B cell (primary cell): ENCODE measurements at regions of chrX and their contacts with region 1.

Region 1: DNA sequence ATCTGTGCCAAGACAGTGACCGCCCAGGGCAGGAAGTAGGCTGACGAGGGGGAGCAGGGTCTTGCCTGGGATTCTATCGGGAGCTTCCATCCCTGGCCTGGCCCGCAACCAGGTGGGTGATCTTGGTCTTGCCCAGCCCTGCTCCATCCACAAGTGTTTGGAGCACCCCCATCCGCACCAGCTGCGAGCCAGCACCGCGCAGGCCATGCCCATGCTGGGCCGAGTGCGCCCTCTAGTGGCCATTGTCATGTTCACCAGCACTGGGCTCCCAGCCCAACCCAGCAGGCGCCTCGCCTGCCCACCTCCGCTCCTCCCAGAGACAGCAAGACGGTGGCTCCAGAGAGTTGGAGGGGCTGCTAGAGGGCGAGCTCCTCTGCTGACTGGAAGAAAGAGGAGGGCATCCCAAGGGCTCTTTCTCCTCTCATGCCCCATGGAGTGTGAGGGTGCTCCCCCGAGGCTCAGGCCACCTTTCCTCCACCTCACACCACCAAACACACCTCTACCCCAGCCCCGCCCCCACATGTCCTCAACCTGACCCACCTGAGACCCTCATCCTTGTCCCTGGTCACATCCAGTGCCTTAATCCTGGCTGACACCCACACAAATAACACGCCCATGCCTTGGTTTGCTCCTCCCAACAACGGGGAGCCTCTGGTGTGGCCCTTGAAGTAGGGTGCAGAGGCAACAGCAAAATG is 9.8 kb upstream of the ATP2B3 start:
- DNase-seq: peak; percentile 81
- ATAC-seq: peak; percentile 98
- H3K4me3 ChIP-seq: no peak overlapping the region
- H3K4me3 Mint-ChIP-seq: no peak overlapping the region
- H3K27ac ChIP-seq: no peak overlapping the region
- H3K27ac Mint-ChIP-seq: no peak overlapping the region
- H3K4me1 ChIP-seq: peaks cover 0 to 7% of the 10 kb centered on the region in 2 donors
- H3K4me1 Mint-ChIP-seq: peaks cover 2% of the 10 kb centered on the region
- H3K27me3 ChIP-seq: no peaks in the 10 kb centered on the region
- H3K27me3 Mint-ChIP-seq: no peaks in the 10 kb centered on the region
- CTCF ChIP-seq: peak; percentile 70

Region 2: DNA sequence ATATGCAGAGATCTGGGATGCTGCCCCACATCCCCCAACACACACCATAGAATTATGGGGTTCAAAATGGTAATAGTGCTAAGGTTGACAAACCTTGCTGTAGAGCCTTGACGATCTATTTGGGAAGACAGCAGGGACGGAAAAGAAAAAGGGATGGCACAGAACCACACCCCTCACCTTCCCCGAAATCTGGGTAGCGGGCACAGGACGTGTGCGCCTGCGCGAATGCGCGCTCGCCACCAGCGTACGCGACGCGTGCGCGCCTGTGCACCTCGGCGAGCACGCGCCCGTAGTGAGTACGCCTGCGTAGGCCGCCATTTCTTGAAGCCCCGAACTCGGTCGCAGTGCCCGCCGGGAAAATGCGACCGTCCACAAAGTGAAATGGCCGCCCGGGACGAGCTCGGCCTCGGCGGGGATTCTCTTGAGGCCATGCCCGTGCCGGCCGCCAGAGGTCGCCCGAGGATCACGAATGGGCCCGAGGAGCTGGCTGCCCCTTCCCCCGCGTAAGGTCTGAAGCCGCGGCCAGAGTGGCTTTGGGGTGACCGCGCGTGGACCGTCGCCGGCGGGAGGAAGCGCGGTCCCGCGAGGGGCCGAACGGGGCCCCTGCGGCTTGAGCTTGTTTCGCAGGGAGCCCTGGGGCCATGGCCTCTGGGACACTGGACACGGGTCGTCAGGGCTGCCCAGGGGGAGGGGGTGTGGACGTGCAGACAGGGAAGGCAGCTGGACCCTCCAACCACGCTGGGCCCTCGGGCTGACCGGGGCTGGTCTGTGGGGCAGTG is 566.1 kb before region 1 on chrX:
- CTCF ChIA-PET with region 1: interaction called, 11 read pairs
- POLR2A ChIA-PET with region 1: no interaction called
- intact Hi-C with region 1: no loop called
- DNase-seq: peak; percentile 93
- ATAC-seq: peak; percentile 93
- H3K4me3 ChIP-seq: peak overlapping the region; percentile 36 to 70 (median 53)
- H3K4me3 Mint-ChIP-seq: peak overlapping the region; percentile 91
- H3K27ac ChIP-seq: peak overlapping the region; percentile 67 to 76
- H3K27ac Mint-ChIP-seq: peak overlapping the region; percentile 91
- H3K4me1 ChIP-seq: peaks cover 5 to 12% of the 10 kb centered on the region in 2 donors
- H3K4me1 Mint-ChIP-seq: peaks cover 9% of the 10 kb centered on the region
- H3K27me3 ChIP-seq: no peaks in the 10 kb centered on the region
- H3K27me3 Mint-ChIP-seq: no peaks in the 10 kb centered on the region
- CTCF ChIP-seq: peak; percentile 81

Region 3: GRCh38 chrX:152958524-152959465 is 548.8 kb before region 1 on chrX:
- CTCF ChIA-PET with region 1: interaction called, 14 read pairs
- POLR2A ChIA-PET with region 1: no interaction called
- intact Hi-C with region 1: no loop called
- DNase-seq: peak; percentile 93
- ATAC-seq: peak; percentile 97
- H3K4me3 ChIP-seq: peak overlapping the region in 4 of 5 experiments; percentile 31 to 46 (median 36)
- H3K4me3 Mint-ChIP-seq: peak overlapping the region; percentile 87
- H3K27ac ChIP-seq: peak overlapping the region; percentile 70 to 75
- H3K27ac Mint-ChIP-seq: peak overlapping the region; percentile 96
- H3K4me1 ChIP-seq: peaks cover 5 to 15% of the 10 kb centered on the region in 2 donors
- H3K4me1 Mint-ChIP-seq: peaks cover 8% of the 10 kb centered on the region
- H3K27me3 ChIP-seq: no peaks in the 10 kb centered on the region
- H3K27me3 Mint-ChIP-seq: no peaks in the 10 kb centered on the region
- CTCF ChIP-seq: peak; percentile 77

Region 4: GRCh38 chrX:153032397-153033118 is 475.1 kb before region 1 on chrX:
- CTCF ChIA-PET with region 1: interaction called, 19 read pairs
- POLR2A ChIA-PET with region 1: no interaction called
- intact Hi-C with region 1: no loop called
- DNase-seq: peak; percentile 72
- ATAC-seq: peak; percentile 84
- H3K4me3 ChIP-seq: peak overlapping the region in 4 of 5 experiments; percentile 40 to 67 (median 56)
- H3K4me3 Mint-ChIP-seq: peak overlapping the region; percentile 93
- H3K27ac ChIP-seq: peak overlapping the region; percentile 47 to 58
- H3K27ac Mint-ChIP-seq: peak overlapping the region; percentile 96
- H3K4me1 ChIP-seq: peaks cover 0 to 13% of the 10 kb centered on the region in 2 donors
- H3K4me1 Mint-ChIP-seq: peaks cover 11% of the 10 kb centered on the region
- H3K27me3 ChIP-seq: no peaks in the 10 kb centered on the region
- H3K27me3 Mint-ChIP-seq: no peaks in the 10 kb centered on the region
- CTCF ChIP-seq: peak; percentile 81

Region 5: GRCh38 chrX:153460845-153461244 is 46.8 kb before region 1 on chrX:
- CTCF ChIA-PET with region 1: interaction called, 15 read pairs
- POLR2A ChIA-PET with region 1: no interaction called
- intact Hi-C with region 1: loop called (anchors 2 kb)
- DNase-seq: peak; percentile 49
- ATAC-seq: no peak
- H3K4me3 ChIP-seq: no peak overlapping the region
- H3K4me3 Mint-ChIP-seq: no peak overlapping the region
- H3K27ac ChIP-seq: no peak overlapping the region
- H3K27ac Mint-ChIP-seq: no peak overlapping the region
- H3K4me1 ChIP-seq: no peaks in the 10 kb centered on the region
- H3K4me1 Mint-ChIP-seq: no peaks in the 10 kb centered on the region
- H3K27me3 ChIP-seq: no peaks in the 10 kb centered on the region
- H3K27me3 Mint-ChIP-seq: no peaks in the 10 kb centered on the region
- CTCF ChIP-seq: peak; percentile 59

Region 6: GRCh38 chrX:153470435-153471363 is 36.9 kb before region 1 on chrX and contains the start of gene HAUS7:
- CTCF ChIA-PET with region 1: interaction called, 27 read pairs
- POLR2A ChIA-PET with region 1: no interaction called
- intact Hi-C with region 1: no loop called
- DNase-seq: peak; percentile 91
- ATAC-seq: peak; percentile 85
- H3K4me3 ChIP-seq: peak within 1 kb of the TSS; percentile 32 to 73 (median 66)
- H3K4me3 Mint-ChIP-seq: peak within 1 kb of the TSS; percentile 88
- H3K27ac ChIP-seq: peak within 1 kb of the TSS; percentile 34 to 39
- H3K27ac Mint-ChIP-seq: peak within 1 kb of the TSS; percentile 82
- H3K4me1 ChIP-seq: peaks cover 5 to 23% of the 10 kb centered on the region in 2 donors
- H3K4me1 Mint-ChIP-seq: peaks cover 16% of the 10 kb centered on the region
- H3K27me3 ChIP-seq: no peaks in the 10 kb centered on the region
- H3K27me3 Mint-ChIP-seq: no peaks in the 10 kb centered on the region
- CTCF ChIP-seq: peak; percentile 37
- total RNA-seq, gene HAUS7: 26.9 and 28.5 TPM in 2 replicates

Region 7: GRCh38 chrX:153599192-153600031 is 91.8 kb after region 1 on chrX:
- CTCF ChIA-PET with region 1: no interaction called
- POLR2A ChIA-PET with region 1: no interaction called
- intact Hi-C with region 1: no loop called
- DNase-seq: peak; percentile 90
- ATAC-seq: peak; percentile 84
- H3K4me3 ChIP-seq: peak overlapping the region; percentile 40 to 77 (median 73)
- H3K4me3 Mint-ChIP-seq: peak overlapping the region; percentile 82
- H3K27ac ChIP-seq: peak overlapping the region; percentile 18 to 64
- H3K27ac Mint-ChIP-seq: peak overlapping the region; percentile 67
- H3K4me1 ChIP-seq: peaks cover 29 to 41% of the 10 kb centered on the region in 2 donors
- H3K4me1 Mint-ChIP-seq: peaks cover 41% of the 10 kb centered on the region
- H3K27me3 ChIP-seq: no peaks in the 10 kb centered on the region
- H3K27me3 Mint-ChIP-seq: no peaks in the 10 kb centered on the region
- CTCF ChIP-seq: no peak

Region 8: GRCh38 chrX:153703036-153703370 is 195.4 kb after region 1 on chrX:
- CTCF ChIA-PET with region 1: no interaction called
- POLR2A ChIA-PET with region 1: no interaction called
- intact Hi-C with region 1: no loop called
- DNase-seq: no peak
- ATAC-seq: no peak
- H3K4me3 ChIP-seq: no peak overlapping the region
- H3K4me3 Mint-ChIP-seq: no peak overlapping the region
- H3K27ac ChIP-seq: no peak overlapping the region
- H3K27ac Mint-ChIP-seq: no peak overlapping the region
- H3K4me1 ChIP-seq: no peaks in the 10 kb centered on the region
- H3K4me1 Mint-ChIP-seq: no peaks in the 10 kb centered on the region
- H3K27me3 ChIP-seq: no peaks in the 10 kb centered on the region
- H3K27me3 Mint-ChIP-seq: no peaks in the 10 kb centered on the region
- CTCF ChIP-seq: no peak